Activated T-helper 2 cell treated with anti-CD3 and anti-CD28 coated beads, Interferon-gamma antibody, Interleukin-2, Interleukin-4, amounts not matched to agents 10 μg/mL and 5 μg/mL and 100 μg/mL, durations not matched to agents 14 hours and 24 hours and 36 hours (primary cell): ENCODE measurements at regions of chr10 and their contacts with region 1.

Region 1: GRCh38 chr10:68955832-68956532 is at the start of gene DDX21:
- DNase-seq: peak; percentile 86
- H3K4me3 Mint-ChIP-seq: peak within 1 kb of the TSS; percentile 97
- H3K27ac Mint-ChIP-seq: peak within 1 kb of the TSS; percentile 100
- H3K4me1 Mint-ChIP-seq: peaks cover 22% of the 10 kb centered on the region
- H3K27me3 Mint-ChIP-seq: no peaks in the 10 kb centered on the region
- total RNA-seq, gene DDX21: 205 and 210 TPM in 2 replicates

Region 2: GRCh38 chr10:69092959-69093850 is 137.2 kb after region 1 on chr10:
- intact Hi-C with region 1: loop called (anchors 1 kb)
- DNase-seq: peak; percentile 78
- H3K4me3 Mint-ChIP-seq: peak overlapping the region; percentile 59
- H3K27ac Mint-ChIP-seq: peak overlapping the region; percentile 62
- H3K4me1 Mint-ChIP-seq: peaks cover 43% of the 10 kb centered on the region
- H3K27me3 Mint-ChIP-seq: no peaks in the 10 kb centered on the region